SK-N-SH (cell line): ENCODE measurements at regions of chr15 and their contacts with region 1.

Region 1: DNA sequence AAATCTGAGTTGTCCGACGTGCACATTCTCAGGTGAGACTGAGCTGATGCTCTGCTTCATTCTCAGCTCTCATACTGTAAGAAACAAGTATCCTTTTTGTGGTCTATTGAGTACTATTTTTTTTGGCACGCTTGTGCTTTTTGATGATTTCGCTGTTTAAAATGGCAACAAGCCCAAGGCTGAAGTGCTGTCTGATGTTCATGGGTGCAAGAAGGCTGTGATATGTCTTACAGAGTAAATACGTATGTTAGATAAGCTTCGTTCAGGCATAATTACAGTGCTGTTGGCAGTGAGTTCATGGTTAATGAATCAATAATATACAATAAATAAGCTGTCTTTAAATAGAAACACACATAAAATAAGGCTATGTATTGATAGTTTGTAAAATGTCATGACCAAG is 27.2 kb downstream of the AQR start:
- DNase-seq: no peak
- H3K4me3 ChIP-seq: no peak overlapping the region
- H3K27ac ChIP-seq: no peak overlapping the region
- H3K4me1 ChIP-seq: no peaks in the 10 kb centered on the region
- H3K27me3 ChIP-seq: no peaks in the 10 kb centered on the region
- CTCF ChIP-seq: no peak
- EP300 ChIP-seq: no peak
- RAD21 ChIP-seq: no peak

Region 2: DNA sequence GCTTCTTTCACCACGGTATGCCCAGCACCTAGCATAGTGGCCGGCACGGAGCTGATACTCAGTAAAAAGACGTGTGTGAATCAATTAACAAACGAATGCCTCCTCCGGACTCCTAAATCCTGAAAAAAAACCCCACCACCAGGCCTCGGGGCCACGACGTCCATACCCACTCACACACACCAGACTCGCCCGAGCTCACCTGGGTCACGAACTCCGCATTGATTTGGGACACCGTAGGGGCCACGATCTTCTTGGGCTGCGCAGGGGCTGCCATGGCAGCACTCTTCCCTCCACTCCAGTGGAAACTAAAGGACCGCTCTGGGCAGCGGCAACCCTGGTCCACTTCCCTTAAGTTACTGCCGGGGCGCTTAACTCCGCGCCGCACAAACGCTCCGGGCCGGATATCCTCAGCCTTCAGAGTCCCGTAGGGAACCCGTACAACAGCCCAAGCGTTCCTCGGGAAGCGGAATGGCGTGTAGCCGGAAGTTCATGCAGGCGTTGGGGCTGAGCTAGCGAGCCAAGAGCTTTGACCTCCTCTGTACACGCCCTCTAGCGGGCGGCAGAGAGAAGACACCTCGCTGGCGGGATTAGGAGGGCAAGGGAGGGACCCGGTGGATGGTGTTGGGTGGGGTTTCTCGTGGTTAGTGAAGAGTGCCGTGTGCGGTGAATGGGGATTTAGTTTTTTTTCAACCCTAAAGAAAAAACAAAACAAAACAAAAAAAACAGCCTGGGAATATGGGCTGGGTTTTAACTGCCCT is 27.2 kb after region 1 on chr15 and contains the start of gene AQR:
- CTCF ChIA-PET with region 1: interaction called, 13 read pairs
- POLR2A ChIA-PET with region 1: no interaction called
- DNase-seq: peak; percentile 91
- H3K4me3 ChIP-seq: peak within 1 kb of the TSS; percentile 92 to 95
- H3K27ac ChIP-seq: peak within 1 kb of the TSS; percentile 74 to 78; a peak in 3 of 4 replicates
- H3K4me1 ChIP-seq: peaks cover 2 to 3% of the 10 kb centered on the region in 2 experiments; a peak in 3 of 4 replicates
- H3K27me3 ChIP-seq: no peaks in the 10 kb centered on the region
- CTCF ChIP-seq: peak; percentile 78
- EP300 ChIP-seq: peak; percentile 11 to 44; a peak in 1 of 4 replicates
- RAD21 ChIP-seq: peak; percentile 45
- polyA plus RNA-seq, gene AQR: 11.6 and 19.6 TPM in 2 replicates